Caco-2 (cell line): ENCODE measurements at regions of chr9 and their contacts with region 1.

Region 1: DNA sequence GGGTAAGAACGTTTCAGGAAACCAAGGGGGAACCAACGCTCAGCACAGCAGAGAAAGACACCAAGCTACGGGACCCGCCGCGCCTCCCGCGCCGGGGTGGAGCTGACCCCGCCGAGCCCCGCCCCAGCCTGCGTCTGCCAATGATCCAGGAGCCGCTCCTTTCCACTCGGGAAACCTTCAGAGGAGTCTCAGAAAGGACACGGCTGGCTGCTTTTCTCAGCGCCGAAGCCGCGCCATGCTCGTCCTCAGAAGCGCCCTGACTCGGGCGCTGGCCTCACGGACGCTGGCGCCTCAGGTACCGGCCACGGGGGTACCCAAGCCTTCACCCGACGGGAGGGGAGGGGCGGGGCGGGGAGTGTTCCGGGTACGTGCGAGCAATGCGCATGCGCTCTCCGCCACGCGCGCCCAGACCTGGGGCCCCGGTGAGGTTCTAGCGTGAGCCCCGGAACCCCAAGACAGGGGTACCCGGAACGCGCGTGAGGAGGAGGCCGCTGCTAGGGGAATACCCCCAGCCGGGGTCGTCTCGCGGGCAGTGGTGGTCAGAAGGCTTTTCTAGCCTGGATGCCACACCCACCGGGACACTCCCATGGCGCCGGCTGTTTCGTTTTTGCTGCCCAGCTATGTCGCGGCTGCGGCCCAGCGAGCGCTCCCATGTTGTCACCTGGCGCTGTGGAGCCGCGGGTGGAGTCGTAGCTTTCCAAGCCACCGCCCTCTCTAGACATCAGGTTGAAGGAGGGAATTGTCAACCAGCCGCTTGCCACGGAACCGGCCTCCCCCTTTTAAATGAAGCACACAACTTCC is at the start of gene NIPSNAP3A:
- DNase-seq: peak; percentile 85 to 87
- H3K4me3 ChIP-seq: peak within 1 kb of the TSS; percentile 71
- H3K4me3 Mint-ChIP-seq: peak within 1 kb of the TSS; percentile 95
- H3K27ac Mint-ChIP-seq: peak within 1 kb of the TSS; percentile 88
- H3K4me1 ChIP-seq: peaks cover 13% of the 10 kb centered on the region
- H3K4me1 Mint-ChIP-seq: peaks cover 27% of the 10 kb centered on the region
- H3K27me3 ChIP-seq: no peaks in the 10 kb centered on the region
- H3K27me3 Mint-ChIP-seq: no peaks in the 10 kb centered on the region
- CTCF ChIP-seq: peak in 1 of 2 experiments; percentile 11
- total RNA-seq, gene NIPSNAP3A: 15.8 and 19.0 TPM in 2 replicates

Region 2: DNA sequence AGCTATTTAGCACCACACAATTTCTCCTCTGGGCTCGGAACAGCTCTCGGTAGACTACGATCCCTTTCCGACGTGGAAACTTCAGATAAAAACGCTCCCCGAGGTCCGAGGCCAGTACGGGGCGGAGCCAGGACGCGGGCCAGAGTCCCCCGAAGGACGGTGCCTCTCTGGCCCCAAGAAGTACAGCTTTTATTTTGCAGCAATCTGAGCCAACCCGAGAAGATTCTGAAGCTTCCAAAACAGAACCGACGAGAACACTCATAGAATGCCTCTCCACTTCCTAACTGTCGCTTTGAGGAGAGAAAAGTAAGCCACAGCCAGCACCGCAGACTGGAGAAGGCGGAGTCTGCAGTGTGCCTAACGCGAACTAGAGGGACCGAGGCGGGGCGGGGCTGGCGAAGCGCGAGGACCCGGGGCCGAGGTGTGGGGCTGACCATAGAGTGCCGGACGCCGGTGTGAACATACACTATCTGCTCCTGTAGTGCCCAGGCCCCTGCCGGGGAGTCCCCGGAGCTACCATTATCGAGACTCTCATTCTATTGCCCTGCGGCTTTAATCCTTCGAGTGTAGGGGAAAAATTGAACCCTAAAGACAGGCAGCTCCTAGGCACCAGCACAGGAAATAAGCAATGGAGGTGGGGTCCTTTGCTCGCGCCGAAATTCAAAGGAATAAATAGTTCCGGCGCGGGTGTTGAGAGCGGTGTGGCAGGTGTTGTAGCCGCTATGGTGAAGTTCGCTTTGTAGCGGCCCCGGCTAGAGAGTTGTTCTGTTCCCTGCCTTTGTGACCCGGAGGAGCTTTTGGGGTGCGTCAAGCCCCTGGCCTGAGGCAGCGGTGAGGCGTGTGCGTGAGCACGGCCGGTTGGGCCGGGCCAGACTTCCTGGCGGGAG is 653.9 kb before region 1 on chr9 and contains the start of gene SMC2:
- CTCF ChIA-PET with region 1: no interaction called
- POLR2A ChIA-PET with region 1: no interaction called
- intact Hi-C with region 1: loop called (anchors 10 kb)
- DNase-seq: peak; percentile 92 to 95
- H3K4me3 ChIP-seq: peak within 1 kb of the TSS; percentile 71
- H3K4me3 Mint-ChIP-seq: peak within 1 kb of the TSS; percentile 86
- H3K27ac Mint-ChIP-seq: peak within 1 kb of the TSS; percentile 99
- H3K4me1 ChIP-seq: peaks cover 16% of the 10 kb centered on the region
- H3K4me1 Mint-ChIP-seq: no peaks in the 10 kb centered on the region
- H3K27me3 ChIP-seq: no peaks in the 10 kb centered on the region
- H3K27me3 Mint-ChIP-seq: no peaks in the 10 kb centered on the region
- CTCF ChIP-seq: no peak
- total RNA-seq, gene SMC2: 36.4 and 37.4 TPM in 2 replicates

Region 3: DNA sequence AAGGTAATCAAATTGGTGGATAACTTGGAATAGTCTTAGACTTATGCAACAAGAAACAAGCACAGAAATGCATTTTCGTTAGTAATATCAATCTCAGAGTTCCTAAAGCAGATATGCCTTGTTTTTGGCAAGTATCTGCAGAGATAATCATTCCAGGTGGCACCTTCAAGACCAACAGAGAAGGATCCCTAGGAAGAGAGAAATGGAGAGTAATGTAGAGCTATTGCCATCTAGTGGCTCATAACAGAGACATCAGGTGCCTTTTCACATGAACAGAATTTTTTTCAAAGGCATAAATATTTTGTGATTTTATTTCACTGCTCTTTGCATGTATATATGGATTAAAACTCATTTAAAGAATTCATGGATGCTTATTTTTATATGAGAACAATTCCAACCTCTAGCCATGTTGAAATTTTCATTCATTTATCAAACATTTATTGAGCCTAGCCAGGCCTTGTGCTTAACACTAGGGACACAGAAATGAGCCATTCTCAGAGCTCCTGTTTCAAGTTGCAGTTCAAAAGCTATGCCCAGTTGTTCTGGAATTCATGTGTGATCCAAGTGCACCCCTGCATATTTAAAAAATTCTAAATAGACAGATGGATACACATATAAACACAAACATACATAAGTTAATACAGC is 361.2 kb before region 1 on chr9:
- CTCF ChIA-PET with region 1: interaction called, 3 read pairs
- POLR2A ChIA-PET with region 1: no interaction called
- intact Hi-C with region 1: loop called (anchors 1 kb)
- DNase-seq: peak in 1 of 2 experiments; percentile 11
- H3K4me3 ChIP-seq: no peak overlapping the region
- H3K4me3 Mint-ChIP-seq: no peak overlapping the region
- H3K27ac Mint-ChIP-seq: no peak overlapping the region
- H3K4me1 ChIP-seq: 0 out of 2 replicates have a peak, but pooled peaks cover 7% of the 10 kb centered on the region
- H3K4me1 Mint-ChIP-seq: no peaks in the 10 kb centered on the region
- H3K27me3 ChIP-seq: no peaks in the 10 kb centered on the region
- H3K27me3 Mint-ChIP-seq: peaks cover 9% of the 10 kb centered on the region
- CTCF ChIP-seq: peak; percentile 58 to 66

Region 4: DNA sequence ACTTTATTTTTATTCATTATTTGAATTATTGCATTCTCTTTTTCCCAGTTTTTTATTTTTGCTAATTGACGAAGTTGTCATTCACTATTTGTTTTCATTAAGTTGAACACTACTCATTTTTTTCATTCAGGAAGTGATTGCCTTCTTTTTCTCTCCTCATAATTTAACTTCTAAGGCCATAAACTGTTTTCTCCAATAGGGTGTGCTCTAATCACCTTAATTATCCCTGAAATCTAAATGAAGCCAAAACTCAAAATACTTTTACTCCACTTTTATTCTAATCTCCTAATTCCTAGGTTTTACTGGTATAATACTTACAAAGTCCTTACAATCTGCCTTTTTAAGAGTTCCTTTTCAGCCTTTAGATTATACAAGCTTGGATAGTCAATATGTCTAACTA is 139.4 kb before region 1 on chr9:
- CTCF ChIA-PET with region 1: no interaction called
- POLR2A ChIA-PET with region 1: no interaction called
- intact Hi-C with region 1: loop called (anchors 1 kb)
- DNase-seq: no peak
- H3K4me3 ChIP-seq: no peak overlapping the region
- H3K4me3 Mint-ChIP-seq: no peak overlapping the region
- H3K27ac Mint-ChIP-seq: no peak overlapping the region
- H3K4me1 ChIP-seq: no peaks in the 10 kb centered on the region
- H3K4me1 Mint-ChIP-seq: no peaks in the 10 kb centered on the region
- H3K27me3 ChIP-seq: no peaks in the 10 kb centered on the region
- H3K27me3 Mint-ChIP-seq: peaks cover 7% of the 10 kb centered on the region
- CTCF ChIP-seq: peak; percentile 13 to 21

Region 5: GRCh38 chr9:104700306-104701028 is 47.3 kb before region 1 on chr9:
- CTCF ChIA-PET with region 1: no interaction called
- POLR2A ChIA-PET with region 1: no interaction called
- intact Hi-C with region 1: loop called (anchors 1 kb)
- DNase-seq: peak; percentile 64
- H3K4me3 ChIP-seq: no peak overlapping the region
- H3K4me3 Mint-ChIP-seq: peak overlapping the region; percentile 32
- H3K27ac Mint-ChIP-seq: peak overlapping the region; percentile 75
- H3K4me1 ChIP-seq: peaks cover 43% of the 10 kb centered on the region
- H3K4me1 Mint-ChIP-seq: peaks cover 27% of the 10 kb centered on the region
- H3K27me3 ChIP-seq: no peaks in the 10 kb centered on the region
- H3K27me3 Mint-ChIP-seq: no peaks in the 10 kb centered on the region
- CTCF ChIP-seq: no peak

Region 6: DNA sequence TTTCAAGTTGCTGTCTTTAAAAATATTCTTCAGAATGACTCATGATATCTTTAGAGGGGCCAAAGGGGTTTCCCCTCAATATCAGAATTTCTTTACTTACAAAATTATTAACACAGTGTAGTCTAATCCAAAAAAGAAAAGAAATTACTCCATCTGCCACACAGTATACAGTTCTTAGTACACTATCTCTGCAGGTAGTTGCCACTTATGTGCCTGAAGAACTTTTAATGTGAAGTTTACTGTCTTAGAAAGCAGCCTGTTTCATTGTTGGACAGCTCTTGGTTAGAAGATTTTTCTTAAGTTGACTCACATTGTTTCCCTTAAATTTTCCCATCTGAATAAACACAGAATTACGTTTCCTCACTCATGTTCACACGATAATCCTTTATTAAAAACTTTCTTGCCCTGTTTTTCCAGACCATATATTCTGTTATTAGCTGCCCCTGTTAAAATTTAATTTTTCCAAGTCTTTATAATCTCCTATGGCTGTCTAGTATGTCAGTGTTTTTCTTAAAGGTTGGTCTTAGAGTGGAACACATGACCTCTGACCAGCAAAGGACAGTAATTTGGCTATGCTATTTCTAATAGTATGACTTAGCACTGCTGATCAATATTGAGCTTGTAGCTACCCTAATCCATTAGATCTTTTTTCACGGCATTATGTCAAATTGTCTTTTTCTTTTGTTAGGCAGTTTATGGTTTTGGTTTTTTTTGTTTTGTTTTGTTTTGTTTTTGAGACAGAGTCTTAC is 788.3 kb after region 1 on chr9:
- CTCF ChIA-PET with region 1: no interaction called
- POLR2A ChIA-PET with region 1: no interaction called
- intact Hi-C with region 1: no loop called
- DNase-seq: no peak
- H3K4me3 ChIP-seq: no peak overlapping the region
- H3K4me3 Mint-ChIP-seq: no peak overlapping the region
- H3K27ac Mint-ChIP-seq: no peak overlapping the region
- H3K4me1 ChIP-seq: no peaks in the 10 kb centered on the region
- H3K4me1 Mint-ChIP-seq: no peaks in the 10 kb centered on the region
- H3K27me3 ChIP-seq: no peaks in the 10 kb centered on the region
- H3K27me3 Mint-ChIP-seq: no peaks in the 10 kb centered on the region
- CTCF ChIP-seq: no peak